Tibial artery (tissue), 4 donors: ENCODE measurements at regions of chr5 and their contacts with region 1.

Region 1: DNA sequence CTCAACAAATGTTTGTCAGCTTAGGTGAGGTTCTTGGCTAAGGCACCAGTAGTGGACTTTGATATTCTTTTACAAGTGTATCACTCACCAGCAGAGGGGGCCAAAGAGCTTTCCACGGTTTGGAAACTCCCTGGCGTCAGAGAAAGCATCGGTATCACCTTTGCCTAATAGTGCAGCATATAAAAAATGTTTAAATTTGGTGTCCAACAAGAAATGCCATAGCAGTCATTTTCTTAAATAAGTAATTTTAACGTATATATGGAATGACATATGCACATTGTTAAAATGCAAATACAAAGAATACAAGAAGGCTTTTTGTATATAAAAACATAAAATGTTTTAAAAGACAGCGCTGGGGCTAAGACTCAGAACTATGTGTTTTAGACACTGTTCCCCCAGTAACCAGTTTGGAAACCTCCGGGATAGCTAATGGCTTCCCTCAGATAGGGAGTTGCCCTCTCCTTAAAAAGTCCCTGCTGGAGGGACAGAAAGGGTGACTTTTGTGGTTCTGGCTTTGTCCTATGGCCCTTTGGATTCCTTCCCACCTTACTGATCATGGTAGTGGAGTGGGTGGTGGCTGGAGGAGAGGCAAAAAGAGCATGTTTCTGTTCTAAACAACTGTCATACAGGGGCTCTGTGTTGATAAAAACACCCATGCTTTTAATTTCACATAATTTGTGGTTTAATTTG is 124.6 kb downstream of the GPBP1 start:
- DNase-seq: peak; percentile 75 to 83
- H3K4me3 ChIP-seq: no peak overlapping the region
- H3K27ac ChIP-seq: peak overlapping the region in 1 of 2 donors; percentile 21
- H3K4me1 ChIP-seq: peaks cover 0 to 10% (median 6%) of the 10 kb centered on the region in 4 donors
- H3K27me3 ChIP-seq: no peaks in the 10 kb centered on the region
- CTCF ChIP-seq: peak; percentile 80 to 87

Region 2: GRCh38 chr5:56475689-56476486 is 822.6 kb before region 1 on chr5:
- intact Hi-C with region 1: no loop called
- DNase-seq: no peak
- H3K4me3 ChIP-seq: no peak overlapping the region
- H3K27ac ChIP-seq: peak overlapping the region in 1 of 2 donors; percentile 50
- H3K4me1 ChIP-seq: peaks cover 0 to 36% (median 11%) of the 10 kb centered on the region in 4 donors
- H3K27me3 ChIP-seq: no peaks in the 10 kb centered on the region
- CTCF ChIP-seq: no peak

Region 3: GRCh38 chr5:57246426-57246825 is 52.0 kb before region 1 on chr5:
- intact Hi-C with region 1: no loop called
- DNase-seq: no peak
- H3K4me3 ChIP-seq: no peak overlapping the region
- H3K27ac ChIP-seq: no peak overlapping the region
- H3K4me1 ChIP-seq: no peaks in the 10 kb centered on the region
- H3K27me3 ChIP-seq: no peaks in the 10 kb centered on the region
- CTCF ChIP-seq: no peak

Region 4: GRCh38 chr5:57259704-57260103 is 38.7 kb before region 1 on chr5:
- intact Hi-C with region 1: no loop called
- DNase-seq: no peak
- H3K4me3 ChIP-seq: no peak overlapping the region
- H3K27ac ChIP-seq: no peak overlapping the region
- H3K4me1 ChIP-seq: peaks cover 0 to 13% (median 2%) of the 10 kb centered on the region in 4 donors
- H3K27me3 ChIP-seq: no peaks in the 10 kb centered on the region
- CTCF ChIP-seq: no peak

Region 5: DNA sequence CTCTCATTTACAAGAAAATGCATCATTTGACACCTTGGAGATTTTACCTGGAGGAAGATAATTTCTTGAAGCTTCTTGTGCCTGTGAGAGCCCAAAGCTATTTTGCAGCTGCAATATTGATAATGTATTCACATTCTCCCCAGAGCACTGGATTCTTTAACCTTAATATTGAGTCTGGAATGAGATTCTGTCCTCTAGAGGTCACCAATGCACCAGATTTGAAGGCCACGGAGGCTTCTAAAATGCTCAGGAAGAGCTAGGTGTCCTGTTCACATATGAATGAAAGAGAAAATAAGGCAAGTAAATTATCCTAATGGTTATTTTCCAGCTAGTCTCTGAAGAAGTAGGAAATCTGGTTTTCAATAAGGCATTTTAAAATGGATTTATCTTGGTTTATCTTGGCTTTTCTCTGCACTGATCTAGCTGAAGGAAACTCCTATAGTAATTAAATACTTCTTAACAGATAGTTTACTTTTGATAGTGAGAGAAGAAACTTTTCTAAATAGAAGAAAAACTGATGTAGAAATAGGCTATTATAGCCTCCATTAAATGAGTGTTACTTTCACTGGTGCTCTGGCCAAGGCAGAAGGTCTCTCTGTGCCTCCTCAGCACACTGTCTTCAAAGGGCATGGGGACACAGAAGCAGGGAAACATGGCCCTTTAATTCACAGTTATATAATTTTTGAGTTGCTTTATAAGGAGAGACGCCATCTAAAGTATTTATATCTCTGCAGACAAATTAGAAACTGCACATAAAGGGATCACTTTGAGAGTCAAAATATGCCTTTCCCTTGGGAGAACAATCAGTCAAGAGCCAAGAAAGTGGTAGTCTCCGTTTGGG is 481.2 kb after region 1 on chr5:
- intact Hi-C with region 1: loop called (anchors 2 kb)
- DNase-seq: no peak
- H3K4me3 ChIP-seq: peak overlapping the region in 1 of 2 donors; percentile 9
- H3K27ac ChIP-seq: peak overlapping the region in 1 of 2 donors; percentile 53
- H3K4me1 ChIP-seq: peaks cover 0 to 33% (median 9%) of the 10 kb centered on the region in 4 donors
- H3K27me3 ChIP-seq: no peaks in the 10 kb centered on the region
- CTCF ChIP-seq: peak; percentile 58 to 70